ENCODE measurements at regions of chr22 and their contacts with region 1.

Region 1: GRCh38 chr22:20418211-20418788 is 19.3 kb downstream of the SCARF2 start:
- DNase-seq: peak; percentile 93
- ATAC-seq: peak; percentile 91

Region 2: DNA sequence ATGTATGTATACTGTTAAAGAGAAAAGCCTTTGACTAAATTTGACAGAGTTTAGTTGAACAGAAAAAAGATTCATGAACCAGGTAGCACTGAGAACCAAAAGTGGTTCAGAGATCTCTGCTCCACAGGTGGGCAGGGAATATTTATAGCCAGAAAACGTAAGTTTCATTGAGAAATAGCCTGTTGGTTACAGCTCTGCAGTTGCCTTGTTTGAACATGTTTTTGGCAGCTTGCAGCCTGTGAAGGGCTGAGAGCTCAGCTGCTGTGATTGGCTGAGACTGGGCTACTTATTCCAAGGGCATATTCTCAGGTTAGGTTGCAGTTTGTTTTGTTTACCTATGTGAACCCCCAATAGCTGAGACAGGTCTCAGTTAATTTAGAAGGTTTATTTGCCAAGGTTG is 37.8 kb before region 1 on chr22:
- intact Hi-C with region 1: no loop called
- DNase-seq: no peak
- ATAC-seq: no peak

Region 3: DNA sequence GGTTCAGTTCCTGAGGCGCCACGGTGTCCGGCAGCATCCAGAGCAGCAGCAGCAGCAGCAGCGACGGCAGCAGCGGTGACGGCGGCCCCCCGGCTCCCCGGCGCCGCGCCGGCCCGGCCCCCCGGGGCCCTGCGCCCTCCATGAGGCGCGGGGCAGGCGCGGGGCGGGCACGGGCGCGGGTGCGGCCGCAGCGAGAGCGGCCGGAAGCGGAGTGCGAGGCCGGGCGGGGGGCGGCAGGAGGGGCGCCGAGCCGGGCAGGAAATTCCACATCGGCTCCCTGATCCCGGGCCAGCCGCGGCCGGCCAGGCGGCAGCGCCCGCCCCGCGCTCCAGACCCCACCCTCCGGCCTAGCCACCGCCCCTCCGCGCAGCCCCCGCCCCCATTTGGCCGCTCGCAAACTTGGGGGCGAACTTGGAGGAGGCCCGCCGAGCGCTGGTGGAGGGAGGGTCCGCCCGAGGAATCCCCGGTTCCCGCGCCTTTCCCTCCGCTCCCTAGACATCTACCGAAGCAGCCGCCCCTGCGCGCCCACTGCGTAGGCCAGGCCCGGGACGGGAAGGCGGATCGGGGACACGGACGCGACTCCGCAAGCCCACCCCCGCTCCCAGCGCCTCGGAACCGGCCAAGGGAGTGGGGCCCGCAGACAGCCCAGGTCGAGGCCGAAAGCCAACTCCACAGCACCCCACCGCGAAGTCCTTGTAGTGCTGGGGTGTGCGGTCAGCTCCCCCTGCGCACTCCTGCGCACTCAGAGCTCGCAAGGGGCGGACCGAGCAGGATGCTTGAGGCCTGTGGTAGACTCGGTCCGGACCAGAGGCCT is 19.5 kb after region 1 on chr22 and contains the start of gene SCARF2:
- intact Hi-C with region 1: loop called (anchors 2 kb)
- DNase-seq: peak; percentile 71
- ATAC-seq: peak; percentile 68
- total RNA-seq, gene SCARF2: 3.0 TPM

Region 4: DNA sequence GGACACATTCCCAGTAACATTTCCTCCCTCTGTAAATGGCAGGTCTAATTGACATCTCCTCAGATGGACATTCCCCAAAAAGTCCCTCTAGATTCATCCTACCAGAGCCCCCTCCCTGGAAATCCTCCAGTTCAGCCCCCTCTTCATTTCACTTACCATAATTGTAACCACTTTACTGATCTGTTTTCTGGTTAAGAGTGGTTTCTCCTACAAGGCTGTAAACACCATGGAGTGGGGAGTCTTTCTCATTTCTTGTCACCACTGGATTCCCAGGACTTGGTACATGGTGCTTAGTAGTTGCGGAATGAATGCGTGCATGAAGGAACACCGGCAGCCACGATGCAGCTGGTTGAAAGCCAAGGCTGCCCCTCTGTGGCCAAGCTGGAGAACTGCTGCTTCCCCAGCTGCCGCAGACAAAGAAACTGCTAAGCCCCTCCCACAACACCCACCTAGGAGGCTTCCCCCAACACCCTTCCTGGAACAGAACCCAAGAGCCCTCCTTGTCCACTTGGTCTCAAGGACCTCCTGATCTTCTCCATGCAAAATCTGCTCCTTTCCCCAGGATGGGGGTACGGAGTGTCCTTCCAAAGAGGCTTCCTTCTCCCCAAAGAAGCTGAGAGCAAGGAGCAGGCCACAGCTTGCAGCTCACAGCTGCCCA is 37.9 kb after region 1 on chr22:
- intact Hi-C with region 1: loop called (anchors 1 kb)
- DNase-seq: peak; percentile 85
- ATAC-seq: peak; percentile 82

Region 5: GRCh38 chr22:20495861-20496681 is 77.8 kb after region 1 on chr22:
- intact Hi-C with region 1: loop called (anchors 2 kb)
- DNase-seq: peak; percentile 96
- ATAC-seq: peak; percentile 98

Region 6: GRCh38 chr22:20568989-20569769 is 150.9 kb after region 1 on chr22:
- intact Hi-C with region 1: loop called (anchors 5 kb)
- DNase-seq: peak; percentile 81
- ATAC-seq: peak; percentile 75

Measured in Right ventricle myocardium inferior (tissue), 1 donor.